Naive thymus-derived CD4-positive, alpha-beta T cell (primary cell): ENCODE measurements at regions of chr18 and their contacts with region 1.

Region 1: DNA sequence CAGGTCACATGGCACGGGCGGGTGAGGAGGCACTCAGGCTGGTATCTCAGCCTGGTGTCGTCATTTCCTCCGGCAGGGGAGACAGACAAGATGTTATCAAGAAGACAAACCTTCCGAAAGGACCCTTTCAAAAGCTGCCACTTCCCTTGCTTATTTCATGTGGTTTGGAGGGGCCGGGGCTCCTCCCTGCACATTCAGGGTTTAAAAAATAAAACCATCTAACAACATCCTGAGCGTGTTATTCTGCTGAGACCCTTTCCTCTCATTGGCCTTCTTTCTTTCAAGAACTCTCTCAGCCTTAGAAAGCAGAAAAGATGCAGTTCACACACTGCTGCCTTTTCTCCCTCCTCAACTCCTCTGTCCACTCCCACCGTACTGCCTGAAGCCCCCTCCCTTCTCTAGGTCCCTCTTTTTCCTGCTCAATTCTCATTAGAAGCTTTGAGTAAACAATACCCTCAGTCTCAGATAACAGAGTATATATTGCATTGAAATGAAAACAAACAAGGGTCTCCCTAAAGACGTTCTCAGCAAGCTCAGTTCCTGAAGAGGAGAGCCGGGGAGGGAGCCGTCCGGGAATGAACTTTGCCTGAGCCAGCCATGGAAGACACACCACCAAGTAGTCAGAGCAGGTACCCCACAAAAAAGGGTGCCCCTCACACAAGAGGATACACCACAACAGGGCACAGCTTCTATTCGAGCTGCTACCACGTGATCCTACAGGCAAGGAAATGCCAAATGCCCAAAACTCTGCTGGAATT is 9.7 kb downstream of the SMAD7 start:
- DNase-seq: peak; percentile 53 to 98 (median 96)
- ATAC-seq: peak; percentile 91
- H3K4me3 ChIP-seq: peak overlapping the region; percentile 36
- H3K4me3 Mint-ChIP-seq: peak overlapping the region; percentile 78 to 94 (median 86)
- H3K27ac ChIP-seq: peak overlapping the region; percentile 49
- H3K27ac Mint-ChIP-seq: peak overlapping the region; percentile 80 to 98 (median 93)
- H3K4me1 ChIP-seq: peaks cover 64 to 85% of the 10 kb centered on the region in 2 donors
- H3K4me1 Mint-ChIP-seq: peaks cover 59 to 100% (median 95%) of the 10 kb centered on the region in 7 donors
- H3K27me3 ChIP-seq: no peaks in the 10 kb centered on the region
- H3K27me3 Mint-ChIP-seq: no peaks in the 10 kb centered on the region

Region 2: GRCh38 chr18:48834413-48835031 is 106.5 kb before region 1 on chr18:
- CTCF ChIA-PET with region 1: no interaction called
- POLR2A ChIA-PET with region 1: interaction called, 3 read pairs
- intact Hi-C with region 1: loop called in 1 of 2 experiments (anchors 2 kb)
- DNase-seq: peak in 7 of 9 donors; percentile 20 to 72 (median 34)
- ATAC-seq: peak; percentile 87
- H3K4me3 ChIP-seq: peak overlapping the region; percentile 46
- H3K4me3 Mint-ChIP-seq: peak overlapping the region; percentile 72 to 92 (median 79)
- H3K27ac ChIP-seq: no peak overlapping the region
- H3K27ac Mint-ChIP-seq: peak overlapping the region; percentile 19 to 98 (median 73)
- H3K4me1 ChIP-seq: peaks cover 59 to 93% of the 10 kb centered on the region in 2 donors
- H3K4me1 Mint-ChIP-seq: peaks cover 53 to 85% (median 65%) of the 10 kb centered on the region in 7 donors
- H3K27me3 ChIP-seq: no peaks in the 10 kb centered on the region
- H3K27me3 Mint-ChIP-seq: no peaks in the 10 kb centered on the region

Region 3: DNA sequence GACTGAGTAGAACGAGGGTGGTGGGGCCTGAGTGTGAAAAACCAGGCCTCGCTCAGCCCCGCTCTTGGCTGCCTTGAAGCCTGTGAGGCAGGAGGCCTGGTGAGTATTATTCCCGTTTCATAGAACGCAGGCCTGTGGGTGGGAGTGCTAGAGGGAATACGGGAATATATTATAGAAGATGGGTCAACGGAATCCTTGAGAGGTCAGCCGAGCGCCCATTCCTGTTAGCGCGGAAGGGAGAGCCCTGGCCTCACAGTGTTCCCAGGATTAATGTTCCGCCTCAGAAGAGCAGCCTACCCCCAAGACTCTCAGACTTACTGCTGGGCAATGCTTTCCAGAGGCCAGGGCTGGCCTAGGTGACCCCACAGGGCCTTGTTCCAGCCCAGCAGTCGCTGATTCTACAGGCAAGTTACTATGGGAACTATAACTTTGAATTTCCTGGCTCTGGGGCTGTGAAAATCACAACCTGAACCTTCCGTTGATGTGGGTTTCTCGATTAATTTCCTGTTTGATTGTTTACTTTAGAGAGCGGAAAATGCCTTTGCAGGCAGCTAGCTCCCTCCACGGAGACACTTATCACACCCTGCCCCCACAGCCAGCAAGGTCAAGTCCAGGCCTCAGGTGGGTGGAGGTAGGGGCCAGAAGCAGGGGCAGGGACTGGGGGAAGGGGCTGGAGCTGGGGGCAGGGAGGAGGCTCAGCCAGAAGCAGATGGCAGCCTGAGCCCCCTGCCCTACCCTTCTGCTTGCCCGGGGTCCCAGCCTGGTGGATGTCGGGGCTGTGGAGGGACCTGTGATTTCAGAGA is 98.6 kb before region 1 on chr18:
- CTCF ChIA-PET with region 1: no interaction called
- POLR2A ChIA-PET with region 1: interaction called, 3 read pairs
- intact Hi-C with region 1: loop called (anchors 1 kb)
- DNase-seq: peak; percentile 25 to 85 (median 71)
- ATAC-seq: peak; percentile 86
- H3K4me3 ChIP-seq: peak overlapping the region; percentile 37
- H3K4me3 Mint-ChIP-seq: peak overlapping the region; percentile 51 to 80 (median 75)
- H3K27ac ChIP-seq: peak overlapping the region; percentile 48
- H3K27ac Mint-ChIP-seq: peak overlapping the region; percentile 92 to 97 (median 93)
- H3K4me1 ChIP-seq: peaks cover 58 to 72% of the 10 kb centered on the region in 2 donors
- H3K4me1 Mint-ChIP-seq: peaks cover 55 to 90% (median 72%) of the 10 kb centered on the region in 7 donors
- H3K27me3 ChIP-seq: no peaks in the 10 kb centered on the region
- H3K27me3 Mint-ChIP-seq: no peaks in the 10 kb centered on the region

Region 4: DNA sequence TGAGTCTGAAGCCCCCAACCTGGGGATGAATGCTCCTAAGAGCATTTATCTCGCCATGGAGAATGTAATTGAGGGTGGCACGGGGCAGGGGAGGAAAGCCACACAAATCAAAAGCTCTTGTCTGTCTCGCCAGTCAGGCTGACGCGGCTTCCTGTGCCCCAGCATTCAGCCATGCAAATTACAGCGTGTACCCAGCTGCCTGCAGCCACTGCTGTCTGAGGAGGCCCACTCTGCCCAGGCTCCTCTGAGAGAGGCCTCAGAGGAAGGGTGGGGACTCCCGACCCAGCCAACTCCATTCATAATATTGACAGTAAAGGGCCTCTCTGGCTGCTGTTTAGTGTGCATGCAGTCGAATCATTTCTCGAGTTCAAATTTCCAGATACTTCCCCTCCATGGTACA is 12.2 kb before region 1 on chr18:
- CTCF ChIA-PET with region 1: interaction called, 8 read pairs
- POLR2A ChIA-PET with region 1: interaction called, 28 read pairs
- intact Hi-C with region 1: loop called (anchors 1 kb)
- DNase-seq: peak; percentile 46 to 76 (median 64)
- ATAC-seq: peak; percentile 87
- H3K4me3 ChIP-seq: peak overlapping the region; percentile 12
- H3K4me3 Mint-ChIP-seq: peak overlapping the region; percentile 72 to 86 (median 79)
- H3K27ac ChIP-seq: no peak overlapping the region
- H3K27ac Mint-ChIP-seq: peak overlapping the region; percentile 50 to 98 (median 74)
- H3K4me1 ChIP-seq: peaks cover 62 to 73% of the 10 kb centered on the region in 2 donors
- H3K4me1 Mint-ChIP-seq: peaks cover 78 to 98% (median 96%) of the 10 kb centered on the region in 7 donors
- H3K27me3 ChIP-seq: no peaks in the 10 kb centered on the region
- H3K27me3 Mint-ChIP-seq: no peaks in the 10 kb centered on the region

Region 5: DNA sequence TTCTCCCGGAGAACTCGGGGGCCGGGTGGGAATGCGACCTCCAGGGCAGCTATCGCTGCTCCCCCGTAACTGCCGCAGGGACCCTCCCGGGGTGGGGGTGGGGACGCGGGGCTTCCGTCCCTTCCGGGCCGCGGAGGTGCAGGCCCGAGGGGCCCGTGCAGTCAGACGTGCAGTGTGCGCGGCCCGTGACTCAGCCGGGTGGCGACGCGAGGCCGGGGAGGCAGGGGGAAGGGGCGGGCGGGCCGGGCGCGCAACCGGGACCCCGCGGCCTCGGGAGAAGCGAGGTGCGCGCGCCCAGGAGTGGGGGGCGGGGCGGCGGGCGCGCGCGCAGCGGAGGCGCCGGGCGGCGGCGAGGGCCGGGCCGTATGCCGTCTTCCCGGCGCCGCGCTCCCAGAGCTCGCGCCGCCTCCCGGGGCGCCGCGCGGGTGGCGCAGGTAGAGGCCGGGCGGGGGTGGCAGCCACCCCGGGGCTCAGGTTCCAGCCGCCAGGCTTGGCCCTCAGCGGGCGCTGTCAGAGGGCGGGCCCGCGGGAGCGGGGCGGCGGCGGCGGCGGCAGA is 34.7 kb after region 1 on chr18:
- CTCF ChIA-PET with region 1: interaction called, 3 read pairs
- POLR2A ChIA-PET with region 1: no interaction called
- intact Hi-C with region 1: loop called in 1 of 2 experiments (anchors 1 kb)
- DNase-seq: peak in 8 of 9 donors; percentile 29 to 66 (median 38)
- ATAC-seq: peak; percentile 79
- H3K4me3 ChIP-seq: peak overlapping the region; percentile 50
- H3K4me3 Mint-ChIP-seq: peak overlapping the region in 7 of 10 donors; percentile 35 to 83 (median 59)
- H3K27ac ChIP-seq: no peak overlapping the region
- H3K27ac Mint-ChIP-seq: no peak overlapping the region
- H3K4me1 ChIP-seq: no peaks in the 10 kb centered on the region
- H3K4me1 Mint-ChIP-seq: peaks cover 0 to 16% (median 11%) of the 10 kb centered on the region in 7 donors
- H3K27me3 ChIP-seq: no peaks in the 10 kb centered on the region
- H3K27me3 Mint-ChIP-seq: peaks cover 8 to 65% (median 18%) of the 10 kb centered on the region in 5 donors

Region 6: DNA sequence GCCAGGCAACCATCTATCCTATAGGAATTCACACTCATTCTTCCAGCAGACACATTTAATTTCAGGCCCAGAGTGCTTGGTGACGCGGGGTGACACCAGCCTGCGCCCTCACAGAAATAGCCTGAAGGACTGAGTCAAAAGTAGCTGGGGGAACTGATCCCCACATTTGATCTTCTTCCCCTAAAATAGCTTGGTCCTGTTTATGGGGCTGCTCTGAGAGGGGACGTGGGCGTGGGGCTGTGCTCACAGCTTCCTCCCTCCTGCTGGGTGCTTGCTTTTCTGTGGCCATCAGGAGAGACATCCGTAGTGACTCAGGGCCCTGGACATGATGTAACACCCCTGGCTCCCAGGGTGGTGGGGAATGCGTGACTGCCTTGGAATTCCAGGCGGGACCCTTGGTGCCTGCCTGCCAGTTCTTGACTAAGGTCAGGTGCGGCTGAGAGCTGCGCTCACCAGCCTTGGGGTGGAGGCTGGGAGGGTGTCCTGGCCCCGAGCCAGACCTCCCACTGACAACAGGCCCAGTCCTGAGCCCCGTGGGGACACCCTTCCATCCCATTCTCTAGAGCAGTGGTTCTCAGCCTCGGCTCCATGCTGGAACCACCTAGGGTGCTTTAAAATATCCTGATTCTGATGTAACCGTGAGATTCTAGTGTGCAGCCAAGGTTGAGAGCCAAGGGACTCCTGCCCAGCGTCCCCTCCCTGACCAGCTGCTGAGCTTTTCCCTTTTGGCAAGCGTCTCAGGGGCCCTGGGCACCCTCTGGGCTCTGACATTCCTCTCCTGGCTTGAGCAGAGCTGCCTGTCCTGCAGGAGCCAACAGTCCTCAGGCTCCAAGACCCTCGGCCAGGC is 57.2 kb after region 1 on chr18:
- CTCF ChIA-PET with region 1: no interaction called
- POLR2A ChIA-PET with region 1: no interaction called
- intact Hi-C with region 1: loop called in 1 of 2 experiments (anchors 1 kb)
- DNase-seq: no peak
- ATAC-seq: peak; percentile 25
- H3K4me3 ChIP-seq: no peak overlapping the region
- H3K4me3 Mint-ChIP-seq: peak overlapping the region in 2 of 10 donors; percentile 3 to 59
- H3K27ac ChIP-seq: no peak overlapping the region
- H3K27ac Mint-ChIP-seq: peak overlapping the region in 6 of 9 donors; percentile 58 to 95 (median 89)
- H3K4me1 ChIP-seq: peaks cover 7 to 17% of the 10 kb centered on the region in 2 donors
- H3K4me1 Mint-ChIP-seq: peaks cover 9 to 26% (median 17%) of the 10 kb centered on the region in 7 donors
- H3K27me3 ChIP-seq: no peaks in the 10 kb centered on the region
- H3K27me3 Mint-ChIP-seq: peaks cover 0 to 12% (median 0%) of the 10 kb centered on the region in 5 donors